Heart left ventricle (tissue), 16 donors: ENCODE measurements at regions of chr10 and their contacts with region 1.

Region 1: GRCh38 chr10:24223953-24224352 is 15.0 kb downstream of the KIAA1217 start:
- DNase-seq: no peak
- ATAC-seq: peak in 3 of 4 donors; percentile 40 to 86 (median 83)
- H3K4me3 ChIP-seq: no peak overlapping the region
- H3K27ac ChIP-seq: no peak overlapping the region
- H3K4me1 ChIP-seq: peaks cover 0 to 11% (median 1%) of the 10 kb centered on the region in 12 donors
- H3K27me3 ChIP-seq: no peaks in the 10 kb centered on the region
- CTCF ChIP-seq: no peak
- POLR2A ChIP-seq: no peak

Region 2: GRCh38 chr10:23768270-23768669 is 455.7 kb before region 1 on chr10:
- intact Hi-C with region 1: no loop called
- DNase-seq: no peak
- ATAC-seq: no peak
- H3K4me3 ChIP-seq: no peak overlapping the region
- H3K27ac ChIP-seq: no peak overlapping the region
- H3K4me1 ChIP-seq: no peaks in the 10 kb centered on the region
- H3K27me3 ChIP-seq: no peaks in the 10 kb centered on the region
- CTCF ChIP-seq: no peak
- POLR2A ChIP-seq: no peak

Region 3: GRCh38 chr10:24360282-24361127 is 136.6 kb after region 1 on chr10:
- intact Hi-C with region 1: loop called in 1 of 10 experiments (anchors 5 kb)
- DNase-seq: peak in 4 of 5 donors; percentile 67 to 75 (median 69)
- ATAC-seq: peak in 3 of 4 donors; percentile 60 to 83 (median 78)
- H3K4me3 ChIP-seq: no peak overlapping the region
- H3K27ac ChIP-seq: no peak overlapping the region
- H3K4me1 ChIP-seq: peaks cover 0 to 18% (median 3%) of the 10 kb centered on the region in 12 donors
- H3K27me3 ChIP-seq: no peaks in the 10 kb centered on the region
- CTCF ChIP-seq: peak; percentile 49 to 85 (median 75)
- POLR2A ChIP-seq: no peak